IMR-90 (cell line): ENCODE measurements at regions of chr1 and their contacts with region 1.

Region 1: GRCh38 chr1:197841883-197842553 is 60.4 kb upstream of the C1orf53 start:
- DNase-seq: peak; percentile 60
- ATAC-seq: peak; percentile 85
- H3K4me3 ChIP-seq: no peak overlapping the region
- H3K27ac ChIP-seq: peak overlapping the region; percentile 50; the same call in 1 of the 2 replicates
- H3K4me1 ChIP-seq: peaks cover 13% of the 10 kb centered on the region
- H3K27me3 ChIP-seq: no peaks in the 10 kb centered on the region
- CTCF ChIP-seq: no peak
- POLR2A ChIP-seq: no peak
- RAD21 ChIP-seq: no peak

Region 2: DNA sequence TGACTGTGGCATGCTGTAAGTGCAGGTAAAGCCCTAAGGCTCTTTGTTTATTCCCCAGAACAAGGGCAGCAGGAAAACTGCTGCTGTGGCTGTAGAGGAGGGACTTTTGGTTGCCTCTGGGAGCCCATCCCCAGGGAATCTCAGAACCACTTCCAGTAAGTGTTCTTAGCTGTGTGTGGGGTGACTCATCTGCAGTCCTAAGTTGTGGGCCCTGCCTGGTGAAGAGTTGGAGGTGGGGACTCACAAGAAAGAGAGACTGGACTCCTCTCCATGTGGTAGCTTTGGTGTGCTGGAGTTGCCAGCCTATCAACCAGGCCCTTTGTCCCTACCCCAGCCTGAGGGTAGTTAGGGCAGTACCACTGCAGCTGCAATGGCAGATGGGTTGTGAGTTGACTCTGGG is 42.7 kb before region 1 on chr1:
- CTCF ChIA-PET with region 1: no interaction called
- POLR2A ChIA-PET with region 1: no interaction called
- dilution Hi-C with region 1: no loop called
- in situ Hi-C with region 1: loop called (anchors 5 kb)
- intact Hi-C with region 1: no loop called
- DNase-seq: peak; percentile 88
- ATAC-seq: peak; percentile 98
- H3K4me3 ChIP-seq: no peak overlapping the region
- H3K27ac ChIP-seq: peak overlapping the region; percentile 67
- H3K4me1 ChIP-seq: peaks cover 12% of the 10 kb centered on the region
- H3K27me3 ChIP-seq: no peaks in the 10 kb centered on the region
- CTCF ChIP-seq: no peak
- POLR2A ChIP-seq: no peak
- RAD21 ChIP-seq: no peak